PC-9 (cell line): ENCODE measurements at regions of chr19 and their contacts with region 1.

Region 1: DNA sequence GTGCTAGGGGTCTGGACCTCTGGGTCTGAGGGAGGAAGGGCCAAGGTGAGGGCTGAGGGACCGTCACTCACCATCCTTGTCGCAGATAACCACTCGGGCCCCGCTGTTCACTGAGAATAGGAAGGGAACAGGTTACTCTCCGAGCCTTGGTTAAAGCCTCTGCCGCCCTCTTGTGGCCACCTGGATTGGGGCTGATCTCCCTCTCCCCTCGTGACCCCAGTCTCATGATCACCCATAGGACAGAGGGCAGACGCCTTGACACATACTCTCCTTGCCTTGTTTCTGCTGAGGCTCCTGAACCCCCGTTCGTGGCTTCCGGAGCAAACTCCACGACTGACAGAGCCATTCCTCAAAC is 580 bp downstream of the HSD17B14 start:
- DNase-seq: peak; percentile 83 to 92
- H3K4me3 ChIP-seq: peak overlapping the region; percentile 67
- H3K27ac ChIP-seq: peak overlapping the region; percentile 28
- H3K4me1 ChIP-seq: no peaks in the 10 kb centered on the region
- H3K27me3 ChIP-seq: no peaks in the 10 kb centered on the region
- CTCF ChIP-seq: peak; percentile 93

Region 2: DNA sequence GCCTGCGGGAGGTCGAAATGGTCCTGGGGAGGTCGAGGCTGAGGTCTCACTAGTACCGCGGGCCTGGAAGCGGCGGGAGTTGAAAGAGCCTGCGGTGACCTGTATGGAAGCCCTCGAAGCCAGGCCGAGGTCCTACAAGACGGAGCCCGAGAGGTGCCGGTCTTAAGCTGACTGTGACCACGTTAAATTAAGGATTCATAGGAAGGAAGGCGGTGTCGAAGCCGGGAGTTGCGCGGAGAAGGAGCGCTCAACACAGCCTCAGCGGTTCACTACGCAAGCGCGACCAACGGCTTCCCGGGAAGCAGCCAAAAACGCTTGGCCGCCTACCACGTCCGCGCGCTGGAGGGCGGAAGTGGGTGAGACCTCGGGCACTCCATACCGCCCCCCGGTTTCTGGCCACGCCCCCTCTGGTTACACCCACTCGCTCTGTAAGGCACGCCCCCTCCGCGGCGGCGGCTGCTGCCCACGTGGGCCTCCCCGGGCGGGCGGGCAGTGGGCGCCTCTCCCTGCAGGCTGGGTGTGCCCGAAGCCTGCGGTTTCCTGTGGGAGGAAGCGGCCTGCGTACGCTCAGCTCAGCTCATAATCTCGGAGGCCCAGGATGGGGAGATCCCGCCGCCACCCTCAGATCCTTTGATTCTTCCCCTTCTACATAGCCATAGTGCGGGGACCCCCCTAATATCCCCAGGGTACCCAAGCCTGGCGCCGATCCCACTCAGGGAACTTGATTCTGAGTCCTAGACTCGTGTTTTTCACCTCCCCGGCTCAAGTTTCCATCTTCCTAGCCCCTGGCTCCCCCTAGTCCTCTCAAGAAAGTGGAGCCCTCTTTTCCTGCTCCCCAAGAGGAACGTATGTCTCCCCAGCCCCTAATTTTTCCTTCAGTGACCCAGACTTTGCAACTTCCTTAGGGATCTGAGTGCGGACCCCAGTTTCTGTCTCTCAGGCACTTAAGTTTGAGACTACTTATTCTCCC is 513.8 kb before region 1 on chr19:
- CTCF ChIA-PET with region 1: no interaction called
- POLR2A ChIA-PET with region 1: no interaction called
- intact Hi-C with region 1: no loop called
- DNase-seq: peak; percentile 91 to 100
- H3K4me3 ChIP-seq: peak overlapping the region; percentile 83
- H3K27ac ChIP-seq: peak overlapping the region; percentile 90
- H3K4me1 ChIP-seq: peaks cover 53% of the 10 kb centered on the region
- H3K27me3 ChIP-seq: no peaks in the 10 kb centered on the region
- CTCF ChIP-seq: 0 out of 2 replicates have a peak, but pooled peaks have one; percentile 32

Region 3: GRCh38 chr19:48696353-48697010 is 139.2 kb before region 1 on chr19:
- CTCF ChIA-PET with region 1: no interaction called
- POLR2A ChIA-PET with region 1: interaction called, 11 read pairs
- intact Hi-C with region 1: no loop called
- DNase-seq: peak in 1 of 2 experiments; percentile 27
- H3K4me3 ChIP-seq: peak overlapping the region; percentile 47
- H3K27ac ChIP-seq: no peak overlapping the region
- H3K4me1 ChIP-seq: peaks cover 24% of the 10 kb centered on the region
- H3K27me3 ChIP-seq: no peaks in the 10 kb centered on the region
- CTCF ChIP-seq: no peak

Region 4: GRCh38 chr19:48795055-48795684 is 40.5 kb before region 1 on chr19:
- CTCF ChIA-PET with region 1: interaction called, 10 read pairs
- POLR2A ChIA-PET with region 1: interaction called, 5 read pairs
- intact Hi-C with region 1: loop called (anchors 1 kb)
- DNase-seq: peak; percentile 87 to 88
- H3K4me3 ChIP-seq: peak overlapping the region; percentile 55
- H3K27ac ChIP-seq: peak overlapping the region; percentile 34
- H3K4me1 ChIP-seq: 0 out of 2 replicates have a peak, but pooled peaks cover 3% of the 10 kb centered on the region
- H3K27me3 ChIP-seq: no peaks in the 10 kb centered on the region
- CTCF ChIP-seq: peak; percentile 100

Region 5: GRCh38 chr19:48872182-48872883 is 36.6 kb after region 1 on chr19 and contains the start of gene PPP1R15A:
- CTCF ChIA-PET with region 1: no interaction called
- POLR2A ChIA-PET with region 1: no interaction called
- intact Hi-C with region 1: loop called (anchors 5 kb)
- DNase-seq: peak; percentile 95 to 98
- H3K4me3 ChIP-seq: peak within 1 kb of the TSS; percentile 93
- H3K27ac ChIP-seq: peak within 1 kb of the TSS; percentile 97
- H3K4me1 ChIP-seq: peaks cover 22% of the 10 kb centered on the region
- H3K27me3 ChIP-seq: peaks cover 2% of the 10 kb centered on the region; the same call in 1 of the 2 replicates
- CTCF ChIP-seq: peak; percentile 39; the same call in 1 of the 2 replicates
- total RNA-seq, gene PPP1R15A: 49.5 and 53.6 TPM in 2 replicates